PC-9 (cell line): ENCODE measurements at regions of chr20 and their contacts with region 1.

Region 1: DNA sequence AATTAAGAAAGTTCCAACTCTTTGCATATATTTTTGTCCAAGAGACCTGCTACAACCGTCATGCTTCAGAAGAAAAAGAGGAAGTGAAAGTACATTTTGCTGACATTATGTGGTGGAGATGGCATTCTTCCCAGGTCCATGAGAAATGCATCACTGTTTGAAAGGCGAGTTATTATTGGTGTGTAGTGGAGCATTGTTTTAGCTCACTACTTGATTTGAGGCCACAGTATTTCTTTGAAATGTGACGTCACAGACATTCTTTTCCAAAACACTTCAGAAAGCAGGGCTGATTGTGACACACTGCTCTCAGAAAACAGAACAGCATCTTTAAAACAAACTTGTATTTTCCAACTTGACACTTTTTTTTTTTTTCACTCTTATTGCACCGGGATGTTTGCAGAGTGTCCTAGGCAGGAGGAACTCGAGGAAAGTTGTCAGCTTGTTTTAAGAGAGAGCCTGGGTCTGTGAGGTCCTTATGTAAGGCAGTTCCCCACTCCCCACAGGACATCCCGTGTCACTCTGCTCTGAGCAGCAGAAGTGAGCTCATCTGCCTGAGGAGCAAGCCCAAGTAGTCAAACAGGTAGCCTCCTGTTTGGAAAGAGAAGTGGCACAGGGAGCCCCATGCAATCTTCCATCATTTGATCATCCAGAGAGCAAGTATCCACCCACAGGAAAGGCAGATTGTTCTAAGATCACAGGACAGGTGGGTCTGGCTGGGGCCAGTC is 1.1 kb downstream of the SPTLC3 start:
- DNase-seq: peak; percentile 38 to 72
- H3K4me3 ChIP-seq: peak overlapping the region; percentile 50
- H3K27ac ChIP-seq: peak overlapping the region; percentile 63
- H3K4me1 ChIP-seq: peaks cover 28% of the 10 kb centered on the region
- H3K27me3 ChIP-seq: no peaks in the 10 kb centered on the region
- CTCF ChIP-seq: no peak

Region 2: GRCh38 chr20:12978613-12979495 is 31.0 kb before region 1 on chr20:
- CTCF ChIA-PET with region 1: no interaction called
- POLR2A ChIA-PET with region 1: interaction called, 11 read pairs
- intact Hi-C with region 1: loop called (anchors 2 kb)
- DNase-seq: no peak
- H3K4me3 ChIP-seq: no peak overlapping the region
- H3K27ac ChIP-seq: no peak overlapping the region
- H3K4me1 ChIP-seq: peaks cover 22% of the 10 kb centered on the region
- H3K27me3 ChIP-seq: no peaks in the 10 kb centered on the region
- CTCF ChIP-seq: no peak

Region 3: DNA sequence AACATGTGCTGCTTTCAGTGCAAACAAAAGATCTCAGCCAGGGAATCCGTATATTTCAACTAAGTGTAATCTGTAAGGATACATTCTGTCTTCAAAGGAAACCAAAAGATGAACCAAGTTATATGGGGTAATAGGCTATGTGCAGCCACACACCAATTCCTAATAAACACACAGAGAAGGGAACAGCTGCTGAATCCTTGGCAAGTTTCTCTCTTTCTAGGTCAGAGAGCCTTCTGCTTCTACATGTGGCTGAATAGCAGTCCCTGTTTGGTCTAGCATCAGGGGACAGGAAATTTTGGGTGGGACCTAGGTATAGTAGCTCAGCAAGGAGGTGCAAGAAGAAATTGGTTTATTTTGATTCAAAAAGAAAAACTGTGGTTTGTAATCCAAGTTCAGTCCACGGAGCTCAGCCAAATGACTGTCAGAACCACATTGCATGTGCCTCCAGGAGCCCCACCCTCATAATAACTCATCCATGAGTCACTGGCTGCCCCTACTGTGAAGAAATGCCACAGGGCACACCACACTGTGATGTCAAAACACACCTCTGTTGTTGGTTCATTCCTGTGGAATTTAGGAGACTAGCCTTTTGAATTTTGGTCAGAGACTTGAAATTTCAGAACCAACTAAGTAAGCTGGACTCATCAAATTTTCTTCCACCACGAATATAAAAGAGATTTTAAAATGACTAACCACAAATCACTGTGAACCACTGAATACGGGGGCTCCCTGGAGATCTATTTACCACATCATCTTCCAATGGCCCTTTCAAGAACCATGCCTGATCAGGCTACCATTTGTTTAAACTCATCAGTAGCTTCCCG is 20.1 kb after region 1 on chr20:
- CTCF ChIA-PET with region 1: no interaction called
- POLR2A ChIA-PET with region 1: interaction called, 5 read pairs
- intact Hi-C with region 1: loop called (anchors 1 kb)
- DNase-seq: peak; percentile 86 to 95
- H3K4me3 ChIP-seq: peak overlapping the region; percentile 29; the same call in 1 of the 2 replicates
- H3K27ac ChIP-seq: peak overlapping the region; percentile 73
- H3K4me1 ChIP-seq: peaks cover 30% of the 10 kb centered on the region
- H3K27me3 ChIP-seq: no peaks in the 10 kb centered on the region
- CTCF ChIP-seq: no peak

Region 4: DNA sequence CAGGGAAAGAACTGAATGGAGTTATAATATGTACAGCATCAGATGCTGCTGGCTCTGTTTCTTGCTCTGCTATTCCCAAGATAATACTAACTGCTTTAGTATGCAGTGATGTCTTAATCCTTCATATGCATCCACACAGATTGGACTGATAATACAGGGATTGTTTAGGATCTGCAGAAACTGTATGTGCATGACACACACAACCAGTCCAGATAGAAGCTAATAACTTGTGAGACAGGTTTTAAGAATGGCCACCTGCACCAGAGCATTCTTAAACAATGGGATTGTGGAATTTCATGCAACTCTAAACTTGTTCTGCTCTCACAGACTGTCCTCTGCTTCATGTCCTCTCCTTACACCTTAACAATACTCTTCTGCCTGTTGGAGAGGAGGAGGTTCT is 89.8 kb after region 1 on chr20:
- CTCF ChIA-PET with region 1: interaction called, 5 read pairs
- POLR2A ChIA-PET with region 1: no interaction called
- intact Hi-C with region 1: loop called (anchors 2 kb)
- DNase-seq: peak; percentile 29 to 75
- H3K4me3 ChIP-seq: no peak overlapping the region
- H3K27ac ChIP-seq: no peak overlapping the region
- H3K4me1 ChIP-seq: peaks cover 16% of the 10 kb centered on the region
- H3K27me3 ChIP-seq: no peaks in the 10 kb centered on the region
- CTCF ChIP-seq: no peak